ENCODE measurements at regions of chr15 and their contacts with region 1.

Region 1: DNA sequence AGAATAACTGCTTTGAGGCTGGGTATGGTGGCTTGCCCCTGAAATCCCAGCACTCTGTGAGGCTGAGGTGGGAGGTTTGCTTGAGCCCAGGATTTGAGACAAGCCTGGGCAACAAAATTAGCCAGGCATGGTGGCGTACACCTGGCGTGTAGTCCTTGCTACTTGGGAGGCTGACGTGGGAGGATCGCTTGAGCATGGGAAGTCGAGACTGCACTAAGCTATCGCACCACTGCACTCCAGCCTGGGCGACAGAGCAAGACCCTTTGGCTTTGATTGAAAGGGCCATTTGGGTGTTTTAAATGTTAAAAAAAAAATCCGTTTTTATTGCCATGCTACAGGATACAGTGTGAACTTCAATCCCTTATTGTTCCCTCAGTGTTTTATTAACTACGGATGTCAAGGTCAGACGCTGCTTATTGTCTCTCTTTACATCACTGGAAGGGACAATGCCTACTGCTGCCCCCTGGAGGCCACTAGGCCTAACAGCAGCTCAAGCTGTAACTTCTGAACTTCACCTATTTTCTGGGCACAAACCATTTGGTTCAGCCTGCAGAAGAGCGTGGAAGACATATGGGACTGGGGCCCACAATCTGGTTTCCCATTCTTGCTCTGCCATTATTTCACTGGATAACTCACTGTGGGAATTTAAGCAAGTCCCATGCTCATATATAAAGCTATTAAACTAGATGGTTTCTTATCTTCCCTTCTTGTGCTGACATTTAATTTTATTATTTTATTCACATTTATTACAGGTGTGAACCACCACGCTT is 15.3 kb upstream of the IREB2 start:
- DNase-seq: peak; percentile 31 to 75 (median 57)
- ATAC-seq: peak; percentile 92
- H3K4me3 ChIP-seq: no peak overlapping the region
- H3K4me3 Mint-ChIP-seq: no peak overlapping the region
- H3K27ac ChIP-seq: no peak overlapping the region
- H3K27ac Mint-ChIP-seq: no peak overlapping the region
- H3K4me1 ChIP-seq: no peaks in the 10 kb centered on the region
- H3K4me1 Mint-ChIP-seq: peaks cover 7% of the 10 kb centered on the region
- H3K27me3 ChIP-seq: no peaks in the 10 kb centered on the region
- H3K27me3 Mint-ChIP-seq: peaks cover 14% of the 10 kb centered on the region
- CTCF ChIP-seq: peak; percentile 92

Region 2: GRCh38 chr15:77959432-77959879 is 463.3 kb before region 1 on chr15:
- CTCF ChIA-PET with region 1: interaction called, 4 read pairs
- POLR2A ChIA-PET with region 1: no interaction called
- intact Hi-C with region 1: loop called (anchors 1 to 2 kb)
- DNase-seq: peak; percentile 55 to 86 (median 73)
- ATAC-seq: peak; percentile 100
- H3K4me3 ChIP-seq: no peak overlapping the region
- H3K4me3 Mint-ChIP-seq: no peak overlapping the region
- H3K27ac ChIP-seq: no peak overlapping the region
- H3K27ac Mint-ChIP-seq: no peak overlapping the region
- H3K4me1 ChIP-seq: peaks cover 3% of the 10 kb centered on the region
- H3K4me1 Mint-ChIP-seq: no peaks in the 10 kb centered on the region
- H3K27me3 ChIP-seq: no peaks in the 10 kb centered on the region
- H3K27me3 Mint-ChIP-seq: peaks cover 2% of the 10 kb centered on the region
- CTCF ChIP-seq: peak; percentile 97

Region 3: GRCh38 chr15:78264304-78265136 is 158.2 kb before region 1 on chr15 and contains the start of gene DNAJA4:
- CTCF ChIA-PET with region 1: interaction called, 5 read pairs
- POLR2A ChIA-PET with region 1: no interaction called
- intact Hi-C with region 1: loop called in 1 of 2 experiments (anchors 5 kb)
- DNase-seq: peak; percentile 29 to 81 (median 63)
- ATAC-seq: peak; percentile 78
- H3K4me3 ChIP-seq: peak within 1 kb of the TSS; percentile 54 to 71
- H3K4me3 Mint-ChIP-seq: peak within 1 kb of the TSS; percentile 91
- H3K27ac ChIP-seq: peak within 1 kb of the TSS; percentile 67 to 77
- H3K27ac Mint-ChIP-seq: peak within 1 kb of the TSS; percentile 96
- H3K4me1 ChIP-seq: peaks cover 15% of the 10 kb centered on the region
- H3K4me1 Mint-ChIP-seq: peaks cover 37% of the 10 kb centered on the region
- H3K27me3 ChIP-seq: no peaks in the 10 kb centered on the region
- H3K27me3 Mint-ChIP-seq: no peaks in the 10 kb centered on the region
- CTCF ChIP-seq: no peak
- total RNA-seq, gene DNAJA4: 48.9 to 52.1 TPM

Region 4: DNA sequence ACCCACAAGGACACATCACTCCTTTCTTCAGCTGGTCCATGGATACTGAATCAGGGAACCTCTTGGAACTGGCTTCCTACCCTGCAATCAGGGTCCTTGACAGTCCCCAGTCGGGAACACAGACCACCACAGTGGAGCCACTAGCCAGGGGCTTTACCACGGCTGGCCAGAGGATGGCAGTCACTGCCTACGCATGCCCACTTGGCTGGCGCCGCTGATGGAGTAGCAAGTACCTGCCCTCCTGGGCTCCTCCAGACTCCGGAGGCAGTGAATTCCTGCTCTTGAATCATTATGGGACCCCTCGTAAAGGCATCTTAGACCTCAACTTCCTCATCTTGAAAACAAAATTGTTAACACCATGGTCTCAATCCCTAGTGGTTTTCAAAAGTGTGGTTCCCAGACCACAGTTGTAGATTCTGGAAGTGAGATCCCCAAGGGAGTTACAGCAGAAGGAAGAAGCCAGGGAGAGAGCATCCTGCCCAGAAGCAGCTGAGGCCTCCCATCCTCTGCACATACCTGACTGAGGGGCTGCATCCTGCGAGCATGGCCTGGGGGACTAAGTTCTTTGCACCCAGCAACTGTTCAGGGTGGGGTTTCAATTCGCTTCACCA is 114.2 kb before region 1 on chr15:
- CTCF ChIA-PET with region 1: interaction called, 5 read pairs
- POLR2A ChIA-PET with region 1: no interaction called
- intact Hi-C with region 1: loop called (anchors 1 to 5 kb)
- DNase-seq: peak in 8 of 9 experiments; percentile 10 to 50 (median 34)
- ATAC-seq: peak; percentile 65
- H3K4me3 ChIP-seq: no peak overlapping the region
- H3K4me3 Mint-ChIP-seq: no peak overlapping the region
- H3K27ac ChIP-seq: no peak overlapping the region
- H3K27ac Mint-ChIP-seq: no peak overlapping the region
- H3K4me1 ChIP-seq: no peaks in the 10 kb centered on the region
- H3K4me1 Mint-ChIP-seq: no peaks in the 10 kb centered on the region
- H3K27me3 ChIP-seq: no peaks in the 10 kb centered on the region
- H3K27me3 Mint-ChIP-seq: peaks cover 15% of the 10 kb centered on the region
- CTCF ChIP-seq: peak; percentile 45

Measured in CD8-positive, alpha-beta T cell (primary cell).